T-cell (primary cell): ENCODE measurements at regions of chr15 and their contacts with region 1.

Region 1: GRCh38 chr15:68078365-68078764 is 24.2 kb downstream of the PIAS1 start:
- DNase-seq: no peak
- ATAC-seq: peak in 2 of 4 experiments; percentile 46 to 48
- H3K4me3 ChIP-seq: no peak overlapping the region
- H3K4me3 Mint-ChIP-seq: peak overlapping the region in 1 of 3 donors; percentile 9
- H3K27ac ChIP-seq: no peak overlapping the region
- H3K27ac Mint-ChIP-seq: no peak overlapping the region
- H3K4me1 ChIP-seq: peaks cover 15 to 17% of the 10 kb centered on the region in 2 experiments
- H3K4me1 Mint-ChIP-seq: peaks cover 80 to 89% (median 82%) of the 10 kb centered on the region in 3 donors
- H3K27me3 ChIP-seq: no peaks in the 10 kb centered on the region
- H3K27me3 Mint-ChIP-seq: no peaks in the 10 kb centered on the region

Region 2: DNA sequence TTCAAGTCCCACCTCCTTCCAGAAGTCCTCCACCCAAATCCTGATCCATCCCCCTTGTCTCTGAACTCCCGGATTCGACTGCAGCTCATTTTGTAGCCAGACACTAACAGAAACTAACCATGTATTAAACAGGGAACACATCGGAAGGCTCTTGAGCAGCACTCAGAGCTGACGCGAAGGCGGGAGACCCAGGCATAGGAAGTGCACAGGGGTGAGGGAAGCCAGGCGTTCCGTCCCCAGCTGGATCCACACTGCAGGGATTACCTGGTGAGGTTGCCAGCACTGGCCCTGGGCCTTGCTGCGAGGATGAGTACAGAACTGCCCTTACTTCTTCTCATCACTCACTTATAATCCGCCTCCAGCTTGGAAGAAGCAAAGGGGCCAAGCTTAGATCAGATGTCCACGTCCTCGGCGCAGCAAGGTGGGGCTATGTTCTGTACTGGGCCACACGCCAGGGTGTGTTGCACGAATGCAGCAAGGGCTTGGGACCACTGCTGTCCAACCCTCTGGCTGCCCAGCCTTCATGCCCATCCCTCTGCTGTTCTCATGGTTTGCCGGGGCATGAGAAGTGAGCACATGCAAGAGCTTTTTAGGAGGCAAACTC is 1137.2 kb before region 1 on chr15:
- CTCF ChIA-PET with region 1: no interaction called
- POLR2A ChIA-PET with region 1: interaction called in 1 of 2 experiments, 12 read pairs
- DNase-seq: no peak
- ATAC-seq: no peak
- H3K4me3 ChIP-seq: no peak overlapping the region
- H3K4me3 Mint-ChIP-seq: no peak overlapping the region
- H3K27ac ChIP-seq: no peak overlapping the region
- H3K27ac Mint-ChIP-seq: no peak overlapping the region
- H3K4me1 ChIP-seq: peaks cover 0 to 3% of the 10 kb centered on the region in 2 experiments
- H3K4me1 Mint-ChIP-seq: no peaks in the 10 kb centered on the region
- H3K27me3 ChIP-seq: peaks cover 0 to 8% of the 10 kb centered on the region in 2 experiments
- H3K27me3 Mint-ChIP-seq: peaks cover 0 to 2% of the 10 kb centered on the region in 2 donors

Region 3: GRCh38 chr15:69114331-69114928 is 1036.1 kb after region 1 on chr15:
- CTCF ChIA-PET with region 1: no interaction called
- POLR2A ChIA-PET with region 1: no interaction called
- DNase-seq: peak in 1 of 35 experiments; percentile 8
- ATAC-seq: peak in 1 of 4 experiments; percentile 23
- H3K4me3 ChIP-seq: no peak overlapping the region
- H3K4me3 Mint-ChIP-seq: peak overlapping the region in 2 of 3 donors; percentile 1 to 68
- H3K27ac ChIP-seq: no peak overlapping the region
- H3K27ac Mint-ChIP-seq: peak overlapping the region in 1 of 2 donors; percentile 19
- H3K4me1 ChIP-seq: peaks cover 0 to 14% of the 10 kb centered on the region in 2 experiments
- H3K4me1 Mint-ChIP-seq: peaks cover 13 to 16% (median 15%) of the 10 kb centered on the region in 3 donors
- H3K27me3 ChIP-seq: peaks cover 0 to 34% of the 10 kb centered on the region in 2 experiments
- H3K27me3 Mint-ChIP-seq: peaks cover 20 to 28% of the 10 kb centered on the region in 2 donors